Heart right ventricle (tissue), 16 donors: ENCODE measurements at regions of chr4 and their contacts with region 1.

Region 1: DNA sequence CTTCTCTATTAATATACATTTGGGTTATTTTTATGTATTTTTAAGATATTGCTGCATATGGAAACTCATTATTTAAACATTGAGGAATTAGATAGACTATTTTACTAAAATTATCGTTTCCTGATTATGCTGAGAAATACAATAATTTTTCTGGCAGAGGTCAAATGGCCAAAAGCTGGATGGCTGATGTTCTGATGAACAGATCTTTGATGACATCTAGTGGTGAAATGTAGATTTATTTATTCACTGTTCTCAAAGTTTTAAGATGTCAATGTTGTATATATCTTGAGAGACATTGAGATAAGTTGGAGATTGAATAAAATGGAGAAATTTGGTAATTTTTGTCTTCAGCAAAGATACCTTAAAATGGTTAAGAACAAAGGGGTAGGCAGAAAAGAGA is 96.2 kb downstream of the UGT8 start:
- DNase-seq: no peak
- ATAC-seq: no peak
- H3K4me3 ChIP-seq: no peak overlapping the region
- H3K27ac ChIP-seq: no peak overlapping the region
- H3K4me1 ChIP-seq: no peaks in the 10 kb centered on the region
- H3K27me3 ChIP-seq: no peaks in the 10 kb centered on the region
- CTCF ChIP-seq: peak; percentile 23 to 72 (median 55)

Region 2: GRCh38 chr4:114386637-114387233 is 308.0 kb before region 1 on chr4:
- intact Hi-C with region 1: loop called (anchors 5 to 10 kb)
- DNase-seq: no peak
- ATAC-seq: no peak
- H3K4me3 ChIP-seq: no peak overlapping the region
- H3K27ac ChIP-seq: no peak overlapping the region
- H3K4me1 ChIP-seq: no peaks in the 10 kb centered on the region
- H3K27me3 ChIP-seq: peaks cover 0 to 5% (median 0%) of the 10 kb centered on the region in 7 donors
- CTCF ChIP-seq: peak; percentile 32 to 74 (median 65)

Region 3: DNA sequence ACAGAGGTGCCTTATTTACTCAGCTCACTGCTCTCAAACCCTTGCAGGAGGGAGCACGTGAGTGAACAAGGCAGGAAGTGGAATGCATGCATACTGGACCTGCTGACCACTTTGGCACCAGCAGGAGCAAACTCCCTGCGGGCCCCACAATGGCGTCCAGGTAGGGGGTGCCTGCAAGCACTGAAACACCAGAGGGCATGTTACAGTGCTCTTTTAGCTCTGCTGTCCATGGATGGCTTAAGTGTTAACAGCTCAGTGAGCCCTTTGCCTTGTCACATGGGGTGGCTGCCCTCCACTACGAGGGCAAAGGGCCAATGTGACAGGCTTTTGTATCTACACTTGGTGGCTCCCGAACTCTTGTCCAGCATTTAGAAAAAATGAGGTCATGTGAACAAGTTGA is 295.7 kb before region 1 on chr4:
- intact Hi-C with region 1: loop called in 1 of 10 experiments (anchors 10 kb)
- DNase-seq: no peak
- ATAC-seq: no peak
- H3K4me3 ChIP-seq: no peak overlapping the region
- H3K27ac ChIP-seq: no peak overlapping the region
- H3K4me1 ChIP-seq: no peaks in the 10 kb centered on the region
- H3K27me3 ChIP-seq: peaks cover 0 to 6% (median 0%) of the 10 kb centered on the region in 7 donors
- CTCF ChIP-seq: no peak

Region 4: DNA sequence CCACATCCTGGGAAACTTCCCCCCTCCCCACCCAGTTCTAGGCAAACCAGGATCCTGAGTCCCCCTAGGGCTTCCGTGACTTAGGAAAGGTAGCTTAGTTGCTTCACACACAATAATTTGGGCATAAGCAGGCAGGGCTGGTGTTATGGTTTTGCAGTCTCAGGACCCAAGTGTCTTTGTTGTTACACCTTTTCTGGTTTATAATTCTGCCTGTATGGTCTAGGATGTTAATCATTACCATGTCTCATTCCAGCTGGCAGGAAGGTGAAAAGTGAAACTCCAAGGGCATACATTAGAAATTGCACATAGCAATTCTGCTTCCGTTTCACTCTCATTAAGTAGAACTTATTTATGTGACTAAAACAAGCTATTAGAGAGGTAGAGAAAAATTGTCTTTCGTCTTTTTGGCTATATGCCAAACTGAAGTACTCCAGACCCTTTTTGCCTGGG is 79.3 kb before region 1 on chr4:
- intact Hi-C with region 1: no loop called
- DNase-seq: no peak
- ATAC-seq: no peak
- H3K4me3 ChIP-seq: no peak overlapping the region
- H3K27ac ChIP-seq: no peak overlapping the region
- H3K4me1 ChIP-seq: no peaks in the 10 kb centered on the region
- H3K27me3 ChIP-seq: peaks cover 0 to 12% (median 0%) of the 10 kb centered on the region in 7 donors
- CTCF ChIP-seq: no peak

Region 5: DNA sequence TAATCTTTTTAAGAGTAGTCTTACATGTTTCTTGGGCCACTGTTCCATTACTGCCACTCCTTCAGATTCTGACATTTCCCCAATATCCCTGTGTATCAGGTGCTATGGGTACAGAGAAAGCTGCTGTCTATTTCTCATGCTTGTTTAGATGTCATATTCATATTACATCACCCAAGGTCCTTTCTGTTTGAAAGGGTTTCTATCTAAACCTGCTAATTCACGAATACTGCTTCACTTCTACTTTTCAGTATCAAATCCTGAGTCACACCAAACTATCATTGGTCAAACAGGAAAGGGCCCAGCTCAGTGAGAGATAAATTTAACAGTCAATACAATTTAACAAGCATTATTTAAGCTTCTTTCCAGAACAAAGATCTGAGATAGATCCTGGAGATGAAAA is 145.2 kb after region 1 on chr4:
- intact Hi-C with region 1: no loop called
- DNase-seq: no peak
- ATAC-seq: no peak
- H3K4me3 ChIP-seq: no peak overlapping the region
- H3K27ac ChIP-seq: no peak overlapping the region
- H3K4me1 ChIP-seq: no peaks in the 10 kb centered on the region
- H3K27me3 ChIP-seq: no peaks in the 10 kb centered on the region
- CTCF ChIP-seq: no peak

Region 6: GRCh38 chr4:115201042-115201330 is 506.2 kb after region 1 on chr4:
- intact Hi-C with region 1: no loop called
- DNase-seq: no peak
- ATAC-seq: no peak
- H3K4me3 ChIP-seq: no peak overlapping the region
- H3K27ac ChIP-seq: no peak overlapping the region
- H3K4me1 ChIP-seq: no peaks in the 10 kb centered on the region
- H3K27me3 ChIP-seq: no peaks in the 10 kb centered on the region
- CTCF ChIP-seq: no peak